ENCODE measurements at regions of chr4 and their contacts with region 1.

Region 1: GRCh38 chr4:68732653-68733466 is 62.4 kb upstream of the UGT2B15 start:
- DNase-seq: peak; percentile 90 to 94
- H3K4me3 ChIP-seq: no peak overlapping the region
- H3K4me3 Mint-ChIP-seq: peak overlapping the region; percentile 63
- H3K27ac Mint-ChIP-seq: peak overlapping the region; percentile 90
- H3K4me1 ChIP-seq: peaks cover 46% of the 10 kb centered on the region
- H3K4me1 Mint-ChIP-seq: peaks cover 40% of the 10 kb centered on the region
- H3K27me3 ChIP-seq: no peaks in the 10 kb centered on the region
- H3K27me3 Mint-ChIP-seq: no peaks in the 10 kb centered on the region
- CTCF ChIP-seq: no peak

Region 2: DNA sequence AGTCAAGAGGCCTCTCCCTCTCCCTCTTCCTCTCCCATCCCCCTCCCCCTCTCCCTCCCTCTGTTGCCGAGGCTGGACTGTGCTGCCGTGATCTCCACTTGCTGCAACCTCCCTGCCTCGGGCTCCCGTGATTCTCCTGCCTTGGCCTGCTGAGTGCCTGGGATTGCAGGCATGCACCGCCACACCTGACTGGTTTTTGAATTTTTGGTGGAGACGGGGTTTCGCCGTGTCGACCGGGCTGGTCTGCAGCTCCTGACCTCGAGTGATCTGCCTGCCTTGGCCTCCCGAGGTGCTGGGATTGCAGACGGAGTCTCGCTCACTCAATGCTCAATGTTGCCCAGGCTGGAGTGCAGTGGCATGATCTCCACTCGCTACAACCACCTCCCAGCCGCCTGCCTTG is 1352.7 kb before region 1 on chr4:
- CTCF ChIA-PET with region 1: no interaction called
- POLR2A ChIA-PET with region 1: no interaction called
- intact Hi-C with region 1: no loop called
- DNase-seq: no peak
- H3K4me3 ChIP-seq: no peak overlapping the region
- H3K4me3 Mint-ChIP-seq: no peak overlapping the region
- H3K27ac Mint-ChIP-seq: no peak overlapping the region
- H3K4me1 ChIP-seq: no peaks in the 10 kb centered on the region
- H3K4me1 Mint-ChIP-seq: no peaks in the 10 kb centered on the region
- H3K27me3 ChIP-seq: no peaks in the 10 kb centered on the region
- H3K27me3 Mint-ChIP-seq: no peaks in the 10 kb centered on the region
- CTCF ChIP-seq: no peak

Region 3: DNA sequence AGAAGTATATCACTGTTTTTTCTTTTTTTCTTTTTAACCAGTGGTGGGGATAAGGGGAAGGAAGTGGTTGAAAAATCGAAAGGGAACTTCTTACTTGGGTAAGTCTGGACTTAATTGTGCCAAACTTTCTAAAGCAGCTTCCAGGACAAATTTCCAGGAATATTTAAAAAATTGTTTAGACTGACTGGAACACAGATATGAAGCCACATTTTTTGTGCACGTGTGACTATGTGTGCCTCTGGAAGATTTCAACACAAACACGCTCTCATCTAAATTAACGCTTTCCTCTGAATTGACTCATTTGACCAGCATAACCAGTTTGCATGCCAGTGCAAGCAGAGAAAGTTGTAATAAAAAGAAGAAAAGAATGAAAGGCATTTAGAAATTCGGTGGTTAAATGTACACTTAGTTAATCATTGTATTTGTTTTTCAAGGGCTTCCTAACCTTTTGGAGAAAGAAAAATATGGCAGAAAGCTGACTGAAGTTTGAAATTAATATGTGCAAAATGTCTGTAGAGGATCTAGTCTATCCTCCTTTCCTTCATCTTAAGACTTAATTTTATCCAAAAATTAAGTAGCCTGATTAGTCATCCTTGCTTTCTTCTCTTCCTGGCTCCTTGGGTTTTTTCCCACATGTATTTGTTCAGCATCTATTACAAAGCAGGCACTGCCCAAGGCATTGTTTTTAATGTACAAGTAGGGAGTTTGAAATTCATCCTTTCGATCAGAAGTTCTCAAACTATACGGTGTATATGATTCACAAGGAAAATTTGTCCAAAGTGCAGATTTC is 364.0 kb before region 1 on chr4:
- CTCF ChIA-PET with region 1: no interaction called
- POLR2A ChIA-PET with region 1: no interaction called
- intact Hi-C with region 1: loop called (anchors 5 kb)
- DNase-seq: peak; percentile 61 to 73
- H3K4me3 ChIP-seq: no peak overlapping the region
- H3K4me3 Mint-ChIP-seq: peak overlapping the region; percentile 47
- H3K27ac Mint-ChIP-seq: peak overlapping the region; percentile 94
- H3K4me1 ChIP-seq: peaks cover 27% of the 10 kb centered on the region
- H3K4me1 Mint-ChIP-seq: peaks cover 17% of the 10 kb centered on the region
- H3K27me3 ChIP-seq: no peaks in the 10 kb centered on the region
- H3K27me3 Mint-ChIP-seq: no peaks in the 10 kb centered on the region
- CTCF ChIP-seq: no peak

Region 4: DNA sequence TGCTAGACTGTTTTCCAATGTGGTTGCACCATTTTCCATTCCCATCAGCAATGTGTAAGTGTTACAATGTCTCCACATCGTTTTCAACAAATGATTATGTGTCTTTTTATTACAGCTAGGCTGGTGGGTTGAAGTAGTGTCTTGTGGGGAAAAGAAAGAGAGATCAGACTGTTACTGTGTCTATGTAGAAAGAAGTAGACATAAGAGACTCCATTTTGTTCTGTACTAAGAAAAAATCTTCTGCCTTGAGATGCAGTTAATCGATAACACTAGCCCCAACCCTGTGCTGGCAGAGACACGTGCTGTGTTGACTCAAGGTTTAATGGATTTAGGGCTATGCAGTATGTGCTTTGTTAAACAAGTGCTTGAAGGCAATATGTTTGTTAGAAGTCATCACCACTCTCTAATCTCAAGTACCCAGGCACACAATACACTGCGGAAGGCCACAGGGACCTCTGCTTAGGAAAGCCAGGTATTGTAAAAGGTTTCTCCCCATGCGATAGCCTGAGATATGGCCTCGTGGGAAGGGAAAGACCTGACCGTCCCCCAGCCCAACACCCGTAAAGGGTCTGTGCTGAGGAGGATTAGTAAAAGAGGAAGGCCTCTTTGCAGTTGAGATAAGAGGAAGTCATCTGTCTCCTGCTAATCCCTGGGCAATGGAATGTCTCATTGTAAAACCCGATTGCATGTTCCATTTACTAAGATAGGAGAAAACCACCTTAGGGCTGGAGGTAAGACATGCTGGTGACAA is 39.4 kb before region 1 on chr4:
- CTCF ChIA-PET with region 1: no interaction called
- POLR2A ChIA-PET with region 1: no interaction called
- intact Hi-C with region 1: loop called (anchors 1 kb)
- DNase-seq: peak; percentile 81 to 90
- H3K4me3 ChIP-seq: no peak overlapping the region
- H3K4me3 Mint-ChIP-seq: no peak overlapping the region
- H3K27ac Mint-ChIP-seq: peak overlapping the region; percentile 72
- H3K4me1 ChIP-seq: peaks cover 20% of the 10 kb centered on the region
- H3K4me1 Mint-ChIP-seq: peaks cover 6% of the 10 kb centered on the region
- H3K27me3 ChIP-seq: no peaks in the 10 kb centered on the region
- H3K27me3 Mint-ChIP-seq: no peaks in the 10 kb centered on the region
- CTCF ChIP-seq: no peak

Region 5: DNA sequence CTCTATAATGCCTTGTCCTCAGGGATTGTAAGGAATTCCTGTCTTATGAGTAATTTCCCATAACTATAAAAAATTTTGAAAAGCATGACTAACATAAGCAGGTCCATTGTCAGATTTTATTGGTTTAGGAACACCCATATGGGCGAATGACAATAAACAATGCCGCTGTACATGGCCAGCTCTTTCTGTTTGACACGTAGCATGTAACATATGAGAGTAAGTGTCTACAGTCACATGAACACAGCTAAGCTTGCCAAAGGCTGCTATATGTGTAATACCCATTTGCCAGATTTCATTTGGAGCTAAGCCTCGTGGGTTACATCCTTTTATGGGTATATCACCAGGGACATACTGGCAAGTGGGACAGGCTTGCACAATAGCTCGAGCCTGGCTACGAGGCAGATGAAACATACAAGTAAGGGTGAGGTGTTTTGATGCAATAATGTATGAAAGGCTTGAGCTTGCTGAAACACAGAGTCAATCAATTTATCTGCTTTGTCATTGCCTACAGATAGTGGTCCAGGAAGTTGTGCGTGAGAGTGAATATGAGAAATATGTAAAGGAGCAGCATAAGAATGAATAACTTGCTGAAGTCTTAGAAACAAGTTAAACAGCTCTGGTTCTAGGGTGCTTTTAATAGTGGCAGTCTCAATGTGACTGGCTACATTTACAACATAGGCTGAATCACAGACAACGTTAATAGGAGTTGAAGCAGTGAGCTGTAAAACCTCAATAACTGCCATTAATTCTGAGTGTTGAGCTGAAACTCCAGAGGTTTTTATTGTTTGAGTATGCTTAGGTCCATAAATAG is 15.5 kb after region 1 on chr4:
- CTCF ChIA-PET with region 1: no interaction called
- POLR2A ChIA-PET with region 1: no interaction called
- intact Hi-C with region 1: no loop called
- DNase-seq: no peak
- H3K4me3 ChIP-seq: no peak overlapping the region
- H3K4me3 Mint-ChIP-seq: no peak overlapping the region
- H3K27ac Mint-ChIP-seq: no peak overlapping the region
- H3K4me1 ChIP-seq: no peaks in the 10 kb centered on the region
- H3K4me1 Mint-ChIP-seq: no peaks in the 10 kb centered on the region
- H3K27me3 ChIP-seq: no peaks in the 10 kb centered on the region
- H3K27me3 Mint-ChIP-seq: no peaks in the 10 kb centered on the region
- CTCF ChIP-seq: no peak

Region 6: DNA sequence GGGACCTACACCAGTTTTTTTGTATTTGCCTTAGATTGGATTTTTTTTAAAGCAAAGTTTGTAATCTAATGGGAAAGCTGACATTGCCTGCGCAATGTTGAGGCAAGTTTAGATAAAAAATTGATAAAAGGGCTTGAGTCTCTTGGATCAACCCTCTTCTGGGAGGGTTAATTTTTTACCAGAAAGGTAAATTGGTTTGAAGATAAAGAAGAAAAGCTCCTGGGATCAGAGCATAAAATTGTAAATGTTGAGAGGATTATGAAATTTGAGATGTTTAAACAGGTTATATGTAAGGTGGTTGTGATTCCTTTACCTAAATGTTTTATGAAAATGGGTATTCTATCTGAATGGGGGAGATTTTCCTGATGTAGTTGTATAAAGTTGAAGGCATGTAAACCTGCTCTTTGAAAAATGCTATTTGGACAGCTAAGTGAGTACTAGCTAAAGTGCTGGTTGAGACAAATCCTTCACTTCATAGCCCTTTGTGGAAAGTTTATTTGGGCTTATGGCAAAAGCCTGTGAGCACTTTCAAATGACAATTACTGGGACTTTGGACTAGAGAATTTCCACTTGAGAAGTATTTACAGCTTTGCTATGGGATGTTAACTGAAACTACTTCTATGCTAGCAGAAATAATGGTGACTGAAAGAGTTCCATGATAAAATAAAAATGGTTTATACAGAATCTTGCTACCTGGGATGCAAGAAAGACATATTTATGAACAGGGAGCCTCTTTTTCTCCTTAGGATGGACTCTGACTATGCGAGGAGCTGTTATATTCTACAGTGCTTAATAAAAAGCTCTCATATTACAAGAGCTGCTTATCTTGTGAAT is 139.2 kb after region 1 on chr4:
- CTCF ChIA-PET with region 1: interaction called, 12 read pairs
- POLR2A ChIA-PET with region 1: interaction called, 4 read pairs
- intact Hi-C with region 1: loop called (anchors 1 kb)
- DNase-seq: peak in 1 of 2 experiments; percentile 67
- H3K4me3 ChIP-seq: no peak overlapping the region
- H3K4me3 Mint-ChIP-seq: peak overlapping the region; percentile 44
- H3K27ac Mint-ChIP-seq: peak overlapping the region; percentile 69
- H3K4me1 ChIP-seq: peaks cover 34% of the 10 kb centered on the region
- H3K4me1 Mint-ChIP-seq: no peaks in the 10 kb centered on the region
- H3K27me3 ChIP-seq: no peaks in the 10 kb centered on the region
- H3K27me3 Mint-ChIP-seq: no peaks in the 10 kb centered on the region
- CTCF ChIP-seq: no peak

Region 7: DNA sequence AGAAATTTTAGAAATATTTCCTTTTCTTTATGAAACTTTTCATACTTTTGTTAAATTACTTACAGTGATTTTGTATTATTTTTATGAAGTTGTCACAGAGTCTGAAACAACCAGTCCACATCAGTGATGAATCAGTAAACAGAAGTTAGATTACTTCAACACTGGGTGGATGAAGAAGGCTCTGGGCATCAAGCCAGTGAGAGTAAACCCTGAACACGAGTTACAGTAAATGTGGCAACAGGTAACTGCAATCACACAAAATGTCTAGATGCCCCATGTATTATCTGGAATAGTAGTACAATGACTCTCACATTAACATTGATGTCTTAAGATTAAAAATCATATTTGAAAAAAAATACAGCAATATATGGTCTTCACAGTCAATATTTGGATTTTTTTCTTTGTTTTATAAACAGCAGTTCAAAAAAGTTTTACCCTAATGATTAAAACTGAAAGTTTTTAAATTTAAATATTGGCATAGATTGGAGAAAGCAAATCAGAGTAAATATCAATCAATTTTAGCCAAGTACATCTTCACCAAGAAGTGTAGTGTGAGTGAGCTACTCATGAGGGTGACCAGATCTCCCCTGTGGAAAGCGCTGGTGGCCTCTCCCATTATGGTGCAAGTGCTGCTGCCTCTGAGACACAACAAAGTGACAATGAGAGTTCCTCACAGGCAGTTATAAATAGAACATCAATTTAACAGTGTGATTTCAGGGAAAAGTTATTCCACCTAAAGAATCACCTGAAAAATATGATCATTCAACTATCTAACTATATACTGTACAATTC is 300.2 kb after region 1 on chr4:
- CTCF ChIA-PET with region 1: no interaction called
- POLR2A ChIA-PET with region 1: no interaction called
- intact Hi-C with region 1: loop called (anchors 5 kb)
- DNase-seq: no peak
- H3K4me3 ChIP-seq: no peak overlapping the region
- H3K4me3 Mint-ChIP-seq: no peak overlapping the region
- H3K27ac Mint-ChIP-seq: no peak overlapping the region
- H3K4me1 ChIP-seq: peaks cover 12% of the 10 kb centered on the region
- H3K4me1 Mint-ChIP-seq: peaks cover 9% of the 10 kb centered on the region
- H3K27me3 ChIP-seq: no peaks in the 10 kb centered on the region
- H3K27me3 Mint-ChIP-seq: no peaks in the 10 kb centered on the region
- CTCF ChIP-seq: no peak